B cell (primary cell): ENCODE measurements at regions of chr1 and their contacts with region 1.

Region 1: GRCh38 chr1:167263819-167264464 is 43.3 kb downstream of the POU2F1 start:
- DNase-seq: peak; percentile 56
- ATAC-seq: peak; percentile 67
- H3K4me3 ChIP-seq: no peak overlapping the region
- H3K4me3 Mint-ChIP-seq: no peak overlapping the region
- H3K27ac ChIP-seq: peak overlapping the region in 1 of 2 donors; percentile 29
- H3K27ac Mint-ChIP-seq: no peak overlapping the region
- H3K4me1 ChIP-seq: peaks cover 37% of the 10 kb centered on the region in 2 donors
- H3K4me1 Mint-ChIP-seq: peaks cover 25% of the 10 kb centered on the region
- H3K27me3 ChIP-seq: no peaks in the 10 kb centered on the region
- H3K27me3 Mint-ChIP-seq: no peaks in the 10 kb centered on the region
- CTCF ChIP-seq: no peak

Region 2: GRCh38 chr1:167066333-167067122 is 197.4 kb before region 1 on chr1:
- CTCF ChIA-PET with region 1: interaction called, 5 read pairs
- POLR2A ChIA-PET with region 1: no interaction called
- intact Hi-C with region 1: loop called (anchors 2 kb)
- DNase-seq: peak; percentile 83
- ATAC-seq: peak; percentile 99
- H3K4me3 ChIP-seq: peak overlapping the region in 1 of 5 experiments; percentile 20
- H3K4me3 Mint-ChIP-seq: no peak overlapping the region
- H3K27ac ChIP-seq: no peak overlapping the region
- H3K27ac Mint-ChIP-seq: no peak overlapping the region
- H3K4me1 ChIP-seq: peaks cover 0 to 7% of the 10 kb centered on the region in 2 donors
- H3K4me1 Mint-ChIP-seq: peaks cover 4% of the 10 kb centered on the region
- H3K27me3 ChIP-seq: no peaks in the 10 kb centered on the region
- H3K27me3 Mint-ChIP-seq: no peaks in the 10 kb centered on the region
- CTCF ChIP-seq: peak; percentile 98

Region 3: GRCh38 chr1:167328816-167329483 is 65.0 kb after region 1 on chr1:
- CTCF ChIA-PET with region 1: interaction called, 16 read pairs
- POLR2A ChIA-PET with region 1: no interaction called
- intact Hi-C with region 1: loop called (anchors 5 kb)
- DNase-seq: peak; percentile 88
- ATAC-seq: peak; percentile 86
- H3K4me3 ChIP-seq: peak overlapping the region; percentile 46 to 67 (median 62)
- H3K4me3 Mint-ChIP-seq: peak overlapping the region; percentile 78
- H3K27ac ChIP-seq: peak overlapping the region; percentile 85 to 86
- H3K27ac Mint-ChIP-seq: peak overlapping the region; percentile 91
- H3K4me1 ChIP-seq: peaks cover 36 to 54% of the 10 kb centered on the region in 2 donors
- H3K4me1 Mint-ChIP-seq: peaks cover 59% of the 10 kb centered on the region
- H3K27me3 ChIP-seq: no peaks in the 10 kb centered on the region
- H3K27me3 Mint-ChIP-seq: no peaks in the 10 kb centered on the region
- CTCF ChIP-seq: no peak

Region 4: DNA sequence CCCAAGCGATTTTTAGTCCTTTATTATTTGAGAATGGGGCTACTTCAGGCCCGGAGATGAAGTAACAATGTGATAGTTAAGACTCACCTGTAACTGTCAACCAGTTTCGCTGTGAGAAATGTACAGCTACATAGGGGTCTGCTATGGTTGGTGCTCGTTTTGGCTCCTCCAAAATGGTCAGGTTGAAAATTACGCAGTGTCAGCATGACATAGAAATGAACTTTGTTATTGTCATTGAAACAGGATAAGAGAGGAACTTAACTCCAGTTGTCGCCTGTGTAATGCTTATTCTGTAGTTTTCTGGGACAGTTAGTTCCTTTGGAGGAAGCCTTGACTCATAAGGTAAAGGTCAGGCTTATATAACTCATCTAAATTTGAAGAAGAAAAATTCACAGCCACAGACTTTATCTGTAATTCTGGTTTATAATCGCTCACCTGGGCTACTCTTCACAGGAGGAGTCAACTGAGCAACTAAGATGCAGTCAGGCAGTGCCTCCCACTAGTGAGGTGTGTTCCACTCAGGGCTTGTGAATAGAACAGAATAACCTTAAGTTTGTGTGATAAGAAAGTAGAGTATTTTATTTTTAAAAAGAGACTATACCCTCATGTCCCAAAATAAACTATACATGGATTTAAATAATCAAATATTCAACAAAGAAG is 123.4 kb after region 1 on chr1:
- CTCF ChIA-PET with region 1: interaction called, 10 read pairs
- POLR2A ChIA-PET with region 1: no interaction called
- intact Hi-C with region 1: no loop called
- DNase-seq: no peak
- ATAC-seq: no peak
- H3K4me3 ChIP-seq: no peak overlapping the region
- H3K4me3 Mint-ChIP-seq: no peak overlapping the region
- H3K27ac ChIP-seq: no peak overlapping the region
- H3K27ac Mint-ChIP-seq: no peak overlapping the region
- H3K4me1 ChIP-seq: no peaks in the 10 kb centered on the region
- H3K4me1 Mint-ChIP-seq: no peaks in the 10 kb centered on the region
- H3K27me3 ChIP-seq: no peaks in the 10 kb centered on the region
- H3K27me3 Mint-ChIP-seq: no peaks in the 10 kb centered on the region
- CTCF ChIP-seq: no peak

Region 5: GRCh38 chr1:167442124-167442848 is 178.3 kb after region 1 on chr1:
- CTCF ChIA-PET with region 1: interaction called, 89 read pairs
- POLR2A ChIA-PET with region 1: interaction called, 4 read pairs
- intact Hi-C with region 1: loop called (anchors 1 kb)
- DNase-seq: peak; percentile 84
- ATAC-seq: peak; percentile 92
- H3K4me3 ChIP-seq: no peak overlapping the region
- H3K4me3 Mint-ChIP-seq: peak overlapping the region; percentile 37
- H3K27ac ChIP-seq: no peak overlapping the region
- H3K27ac Mint-ChIP-seq: no peak overlapping the region
- H3K4me1 ChIP-seq: peaks cover 25 to 29% of the 10 kb centered on the region in 2 donors
- H3K4me1 Mint-ChIP-seq: peaks cover 35% of the 10 kb centered on the region
- H3K27me3 ChIP-seq: peaks cover 0 to 20% (median 3%) of the 10 kb centered on the region in 4 experiments
- H3K27me3 Mint-ChIP-seq: peaks cover 5% of the 10 kb centered on the region
- CTCF ChIP-seq: peak; percentile 93

Region 6: GRCh38 chr1:167542109-167543032 is 278.4 kb after region 1 on chr1:
- CTCF ChIA-PET with region 1: interaction called, 10 read pairs
- POLR2A ChIA-PET with region 1: no interaction called
- intact Hi-C with region 1: no loop called
- DNase-seq: no peak
- ATAC-seq: no peak
- H3K4me3 ChIP-seq: no peak overlapping the region
- H3K4me3 Mint-ChIP-seq: no peak overlapping the region
- H3K27ac ChIP-seq: no peak overlapping the region
- H3K27ac Mint-ChIP-seq: no peak overlapping the region
- H3K4me1 ChIP-seq: peaks cover 3% of the 10 kb centered on the region in 2 donors
- H3K4me1 Mint-ChIP-seq: peaks cover 13% of the 10 kb centered on the region
- H3K27me3 ChIP-seq: no peaks in the 10 kb centered on the region
- H3K27me3 Mint-ChIP-seq: no peaks in the 10 kb centered on the region
- CTCF ChIP-seq: no peak